Panc1 (cell line): ENCODE measurements at regions of chr12 and their contacts with region 1.

Region 1: GRCh38 chr12:10190558-10191388 is 11.9 kb downstream of the TMEM52B start:
- DNase-seq: peak; percentile 41
- ATAC-seq: peak; percentile 96
- H3K4me3 ChIP-seq: no peak overlapping the region
- H3K27ac ChIP-seq: peak overlapping the region; percentile 57; the same call in 1 of the 2 replicates
- H3K4me1 ChIP-seq: peaks cover 12% of the 10 kb centered on the region
- H3K27me3 ChIP-seq: no peaks in the 10 kb centered on the region
- CTCF ChIP-seq: peak; percentile 82

Region 2: DNA sequence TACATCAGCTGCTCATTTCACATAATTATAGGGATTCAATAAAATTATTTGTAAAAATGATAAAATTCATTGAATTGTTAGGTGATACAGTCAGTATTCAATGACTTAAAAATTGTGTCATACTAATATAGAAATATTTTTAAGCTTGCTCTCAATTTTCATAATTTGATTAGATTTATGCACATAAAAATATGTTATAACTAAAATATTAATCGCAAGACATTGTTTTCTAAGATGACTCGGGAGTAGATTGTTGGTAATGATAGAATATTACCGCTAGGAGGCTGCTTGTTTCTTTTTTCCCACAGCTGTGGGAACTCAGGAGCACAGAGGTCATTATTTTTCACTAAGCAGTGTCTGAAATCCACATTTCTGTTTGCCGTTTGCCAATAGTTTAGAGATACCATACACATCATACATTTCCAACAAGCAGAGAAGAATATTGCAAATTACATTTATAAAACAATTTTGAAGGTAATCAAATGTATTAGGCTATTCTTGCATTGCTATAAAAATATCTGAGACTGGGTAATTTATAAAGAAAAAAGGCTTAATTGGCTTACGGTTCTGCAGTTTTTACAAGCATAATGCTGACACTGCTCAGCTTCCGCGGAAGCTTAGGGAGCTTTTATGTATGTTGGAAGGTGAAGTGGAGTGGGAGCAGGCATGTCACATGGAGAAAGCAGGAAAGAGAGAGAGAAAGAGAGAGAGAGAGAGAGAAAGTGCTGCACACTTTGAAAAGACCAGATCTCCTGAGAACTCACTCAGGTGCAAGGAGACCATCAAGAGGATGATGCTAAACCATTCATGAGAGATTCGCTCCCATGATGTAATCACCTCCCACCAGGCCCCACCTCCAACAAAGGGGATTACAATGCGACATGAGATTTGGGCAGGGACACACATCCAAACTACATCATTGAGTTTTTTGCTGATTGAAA is 439.3 kb before region 1 on chr12:
- CTCF ChIA-PET with region 1: no interaction called
- POLR2A ChIA-PET with region 1: no interaction called
- in situ Hi-C with region 1: no loop called
- intact Hi-C with region 1: no loop called
- DNase-seq: no peak
- ATAC-seq: no peak
- H3K4me3 ChIP-seq: no peak overlapping the region
- H3K27ac ChIP-seq: no peak overlapping the region
- H3K4me1 ChIP-seq: no peaks in the 10 kb centered on the region; the same call in 1 of the 2 replicates
- H3K27me3 ChIP-seq: no peaks in the 10 kb centered on the region
- CTCF ChIP-seq: peak; percentile 28; the same call in 1 of the 2 replicates

Region 3: GRCh38 chr12:10102292-10102691 is 88.5 kb before region 1 on chr12:
- CTCF ChIA-PET with region 1: no interaction called
- POLR2A ChIA-PET with region 1: interaction called, 11 read pairs
- in situ Hi-C with region 1: no loop called
- intact Hi-C with region 1: no loop called
- DNase-seq: no peak
- ATAC-seq: no peak
- H3K4me3 ChIP-seq: no peak overlapping the region
- H3K27ac ChIP-seq: peak overlapping the region; percentile 75
- H3K4me1 ChIP-seq: peaks cover 17% of the 10 kb centered on the region
- H3K27me3 ChIP-seq: no peaks in the 10 kb centered on the region
- CTCF ChIP-seq: no peak

Region 4: GRCh38 chr12:10140001-10140400 is 50.8 kb before region 1 on chr12:
- CTCF ChIA-PET with region 1: no interaction called
- POLR2A ChIA-PET with region 1: no interaction called
- in situ Hi-C with region 1: no loop called
- intact Hi-C with region 1: no loop called
- DNase-seq: no peak
- ATAC-seq: no peak
- H3K4me3 ChIP-seq: no peak overlapping the region
- H3K27ac ChIP-seq: no peak overlapping the region
- H3K4me1 ChIP-seq: no peaks in the 10 kb centered on the region; the same call in 1 of the 2 replicates
- H3K27me3 ChIP-seq: no peaks in the 10 kb centered on the region
- CTCF ChIP-seq: peak; percentile 52; the same call in 1 of the 2 replicates

Region 5: DNA sequence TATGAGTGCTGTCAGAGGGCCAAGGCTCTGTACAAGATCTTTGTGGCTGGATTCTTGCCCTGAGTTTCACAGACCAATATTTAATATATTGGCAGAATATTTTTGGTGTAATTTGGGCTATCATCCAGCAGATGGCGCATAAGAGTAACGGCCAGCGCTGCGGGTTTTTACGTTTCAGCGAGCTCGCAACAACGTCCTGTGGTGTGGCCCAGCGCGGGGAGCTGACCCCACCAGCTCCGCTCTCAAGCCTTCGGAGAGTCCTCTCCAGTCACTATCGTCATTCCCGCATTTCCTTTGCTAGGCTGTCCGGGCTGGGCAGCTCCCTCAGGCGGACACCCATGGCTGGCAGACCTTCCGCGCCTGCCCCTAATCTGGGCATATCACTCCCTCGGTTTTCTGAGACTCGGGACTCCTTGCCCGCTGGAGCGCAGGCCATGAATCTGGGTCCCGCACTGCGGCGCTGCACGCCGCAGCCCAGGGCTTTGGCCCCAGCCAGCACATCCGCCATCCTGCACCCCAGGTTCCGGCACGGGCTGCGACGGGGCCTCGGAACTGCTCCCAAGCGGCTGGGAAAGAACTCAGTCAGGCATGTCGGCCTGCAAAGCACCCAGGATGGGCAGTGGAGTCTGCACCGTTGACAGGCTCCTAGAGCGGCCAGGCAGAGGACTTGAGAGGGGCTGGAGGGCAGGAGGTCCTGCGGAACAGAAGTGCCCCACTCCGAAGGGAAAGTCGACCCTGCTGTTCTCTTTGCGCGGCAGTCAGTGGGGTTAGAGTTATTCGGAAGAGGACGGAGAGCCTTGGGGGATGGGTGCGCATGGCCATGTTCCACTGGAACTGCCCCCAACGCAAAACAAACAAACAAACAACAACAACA is 37.3 kb before region 1 on chr12:
- CTCF ChIA-PET with region 1: interaction called, 4 read pairs
- POLR2A ChIA-PET with region 1: no interaction called
- in situ Hi-C with region 1: no loop called
- intact Hi-C with region 1: loop called (anchors 1 kb)
- DNase-seq: no peak
- ATAC-seq: peak; percentile 93
- H3K4me3 ChIP-seq: peak overlapping the region; percentile 53 to 66
- H3K27ac ChIP-seq: peak overlapping the region; percentile 70
- H3K4me1 ChIP-seq: peaks cover 5% of the 10 kb centered on the region; the same call in 1 of the 2 replicates
- H3K27me3 ChIP-seq: no peaks in the 10 kb centered on the region
- CTCF ChIP-seq: peak; percentile 85

Region 6: GRCh38 chr12:10331642-10332239 is 141.0 kb after region 1 on chr12:
- CTCF ChIA-PET with region 1: interaction called, 13 read pairs
- POLR2A ChIA-PET with region 1: no interaction called
- in situ Hi-C with region 1: no loop called
- intact Hi-C with region 1: no loop called
- DNase-seq: peak; percentile 32
- ATAC-seq: peak; percentile 85
- H3K4me3 ChIP-seq: no peak overlapping the region
- H3K27ac ChIP-seq: peak overlapping the region; percentile 39; the same call in 1 of the 2 replicates
- H3K4me1 ChIP-seq: no peaks in the 10 kb centered on the region
- H3K27me3 ChIP-seq: no peaks in the 10 kb centered on the region
- CTCF ChIP-seq: peak; percentile 63; the same call in 1 of the 2 replicates

Region 7: DNA sequence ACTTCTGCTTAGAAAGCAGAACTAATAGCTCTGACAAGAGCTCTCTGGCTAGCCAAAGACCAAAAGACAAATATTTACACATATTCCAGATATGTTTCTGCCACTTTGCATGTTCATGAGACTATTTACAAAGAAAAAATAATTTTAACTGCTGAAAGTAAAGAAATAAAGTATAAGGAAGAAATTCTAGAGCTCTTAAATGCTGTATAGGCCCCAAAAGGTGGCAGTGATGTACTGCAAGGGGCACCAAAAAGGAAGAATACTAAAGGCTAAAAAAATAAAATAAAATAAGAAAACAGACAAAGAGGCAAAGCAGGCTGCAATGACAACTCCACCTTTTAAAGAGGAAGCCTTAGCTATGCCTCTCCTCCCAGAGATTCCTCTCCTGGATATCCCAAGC is 176.1 kb after region 1 on chr12:
- CTCF ChIA-PET with region 1: no interaction called
- POLR2A ChIA-PET with region 1: no interaction called
- in situ Hi-C with region 1: no loop called
- intact Hi-C with region 1: no loop called
- DNase-seq: no peak
- ATAC-seq: no peak
- H3K4me3 ChIP-seq: no peak overlapping the region
- H3K27ac ChIP-seq: peak overlapping the region; percentile 94
- H3K4me1 ChIP-seq: peaks cover 21% of the 10 kb centered on the region
- H3K27me3 ChIP-seq: no peaks in the 10 kb centered on the region
- CTCF ChIP-seq: no peak; the same call in 1 of the 2 replicates